Common myeloid progenitor, CD34-positive (primary cell): ENCODE measurements at regions of chr1 and their contacts with region 1.

Region 1: DNA sequence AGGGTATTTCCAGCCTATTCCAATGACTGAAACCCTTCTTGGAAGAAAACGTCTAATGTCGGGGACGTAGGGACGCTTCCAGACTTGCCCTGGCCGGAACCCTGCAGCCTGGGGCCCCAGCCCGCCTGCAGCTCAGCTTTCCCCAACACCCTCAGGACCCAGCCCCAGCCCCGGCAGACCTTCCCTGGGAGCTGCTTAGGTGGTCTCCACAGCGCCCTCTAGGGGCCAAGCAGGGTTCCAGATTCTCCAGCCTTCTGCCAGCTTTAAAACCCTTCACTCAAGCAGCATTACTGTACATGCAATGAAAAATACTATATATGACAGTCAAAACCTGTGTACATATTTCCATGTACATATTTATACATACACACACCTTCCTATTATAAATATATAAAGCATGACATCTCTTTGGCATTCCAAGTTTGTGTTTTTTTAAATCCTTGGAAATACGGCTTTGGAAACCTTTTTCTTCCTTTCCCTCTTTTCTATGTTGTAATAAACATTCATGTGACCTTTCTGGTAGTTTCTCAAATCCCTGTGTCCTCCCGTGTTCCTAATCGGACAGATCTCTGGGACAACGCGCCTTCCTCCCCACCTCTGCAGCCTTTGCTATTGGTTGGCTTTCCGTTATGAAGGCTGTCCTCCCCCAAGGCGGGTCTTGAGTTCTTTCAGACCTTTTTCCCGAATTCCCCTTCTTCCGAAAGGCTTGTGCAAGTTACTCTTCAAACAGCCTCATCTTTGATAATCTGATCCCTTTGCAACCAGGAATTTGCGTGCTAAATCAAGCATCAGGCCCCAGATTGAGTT is 60.3 kb downstream of the STUM start:
- DNase-seq: peak; percentile 78 to 89 (median 82)
- H3K4me3 ChIP-seq: no peak overlapping the region
- H3K27ac ChIP-seq: no peak overlapping the region
- H3K4me1 ChIP-seq: no peaks in the 10 kb centered on the region
- H3K27me3 ChIP-seq: peaks cover 0 to 2% (median 0%) of the 10 kb centered on the region in 5 experiments

Region 2: DNA sequence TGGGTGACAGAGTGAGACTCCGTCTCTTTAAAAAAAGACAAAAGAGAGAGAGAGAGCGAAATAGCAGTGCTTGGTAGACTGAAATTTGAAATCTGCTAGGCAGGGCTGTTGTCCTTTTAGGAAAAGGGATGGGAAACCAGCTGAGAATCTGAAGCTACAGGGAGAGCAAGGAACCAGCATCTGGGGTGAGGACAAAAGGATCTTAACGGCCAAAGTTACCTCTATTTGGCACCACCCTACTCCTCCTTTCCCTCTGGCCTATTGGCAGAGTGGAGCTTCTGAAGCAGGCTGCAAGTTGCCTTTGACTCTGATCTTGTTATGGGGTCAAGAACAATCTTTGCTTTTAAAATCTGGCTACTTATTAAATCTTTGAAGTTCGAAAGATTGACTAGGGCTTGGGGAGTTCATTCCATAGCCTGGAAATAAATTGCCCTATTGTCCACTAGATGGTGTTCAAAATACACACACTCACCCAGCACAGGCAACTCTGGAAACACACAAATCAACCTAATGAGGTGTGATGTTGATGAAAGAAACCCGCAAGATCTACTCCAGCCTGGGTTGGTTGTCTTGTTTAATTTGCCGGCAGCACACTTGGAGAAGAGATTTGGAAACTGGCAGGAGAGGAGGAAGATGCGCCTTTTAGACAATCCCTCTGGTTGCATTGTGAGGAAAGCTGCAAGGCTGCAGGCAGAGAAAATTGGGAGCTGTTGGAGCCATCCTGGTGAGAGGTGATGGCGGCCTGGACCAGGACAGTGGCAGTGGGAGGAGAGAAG is 184.5 kb before region 1 on chr1:
- CTCF ChIA-PET with region 1: interaction called, 19 read pairs
- POLR2A ChIA-PET with region 1: interaction called, 3 read pairs
- DNase-seq: peak in 2 of 3 donors; percentile 65 to 74
- H3K4me3 ChIP-seq: no peak overlapping the region
- H3K27ac ChIP-seq: no peak overlapping the region
- H3K4me1 ChIP-seq: peaks cover 6 to 28% (median 23%) of the 10 kb centered on the region in 4 experiments
- H3K27me3 ChIP-seq: no peaks in the 10 kb centered on the region